ENCODE measurements at regions of chr2 and their contacts with region 1.

Region 1: DNA sequence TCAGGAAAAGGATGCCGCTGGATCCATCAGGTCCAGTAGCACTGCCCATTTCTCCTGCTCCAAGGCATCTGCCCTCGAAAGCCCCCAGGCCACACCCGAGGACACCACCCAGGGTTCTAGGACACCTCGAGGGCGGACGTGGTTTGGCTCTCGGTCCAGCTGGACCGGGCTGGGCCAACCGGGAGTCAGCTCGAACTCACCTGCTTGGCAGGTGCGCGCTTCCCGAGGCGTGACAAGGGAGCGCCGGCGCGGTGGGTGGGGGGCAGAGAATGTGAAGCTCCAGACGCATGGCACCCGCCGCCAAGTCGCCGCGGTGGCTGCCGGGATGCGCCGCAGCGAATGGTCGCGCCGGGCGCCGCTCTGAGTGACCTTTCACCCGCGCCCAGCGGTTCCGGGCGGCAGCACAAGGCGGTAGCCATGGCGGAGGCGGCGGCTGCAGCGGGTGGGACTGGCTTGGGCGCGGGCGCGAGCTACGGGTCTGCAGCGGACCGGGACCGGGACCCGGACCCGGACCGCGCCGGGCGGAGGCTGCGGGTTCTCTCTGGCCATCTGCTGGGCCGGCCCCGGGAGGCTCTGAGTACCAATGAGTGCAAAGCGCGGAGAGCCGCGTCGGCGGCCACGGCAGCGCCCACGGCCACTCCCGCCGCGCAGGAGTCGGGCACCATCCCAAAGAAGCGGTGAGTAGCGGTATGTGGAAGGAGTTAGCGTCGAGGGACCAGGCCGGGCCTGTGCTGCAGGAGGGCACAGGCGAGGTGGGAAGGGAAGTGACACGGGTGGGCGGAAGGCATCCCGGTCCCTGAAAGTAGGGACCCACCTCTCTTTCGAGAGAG is at the start of gene AGPS:
- DNase-seq: peak; percentile 77

Region 2: DNA sequence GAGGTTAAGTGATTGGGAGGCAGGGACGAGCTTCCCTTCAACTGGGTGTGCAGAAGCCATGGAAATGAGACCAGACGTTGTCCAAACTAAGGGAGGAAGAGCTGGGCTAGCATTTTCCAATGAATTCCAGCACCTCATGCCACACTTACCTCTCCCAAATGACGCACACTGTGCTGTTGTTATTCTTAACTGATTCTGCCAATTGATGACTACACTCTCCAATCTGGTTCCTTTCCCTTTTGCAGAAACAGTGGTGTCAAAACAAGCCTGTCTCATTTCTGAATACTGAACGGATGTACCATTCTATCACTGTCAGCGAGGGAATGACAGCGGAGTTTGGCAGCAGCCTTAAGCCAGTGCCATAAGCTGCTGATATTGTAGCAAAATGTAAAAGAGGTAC is 560.5 kb before region 1 on chr2:
- CTCF ChIA-PET with region 1: no interaction called
- POLR2A ChIA-PET with region 1: no interaction called
- DNase-seq: no peak

Region 3: DNA sequence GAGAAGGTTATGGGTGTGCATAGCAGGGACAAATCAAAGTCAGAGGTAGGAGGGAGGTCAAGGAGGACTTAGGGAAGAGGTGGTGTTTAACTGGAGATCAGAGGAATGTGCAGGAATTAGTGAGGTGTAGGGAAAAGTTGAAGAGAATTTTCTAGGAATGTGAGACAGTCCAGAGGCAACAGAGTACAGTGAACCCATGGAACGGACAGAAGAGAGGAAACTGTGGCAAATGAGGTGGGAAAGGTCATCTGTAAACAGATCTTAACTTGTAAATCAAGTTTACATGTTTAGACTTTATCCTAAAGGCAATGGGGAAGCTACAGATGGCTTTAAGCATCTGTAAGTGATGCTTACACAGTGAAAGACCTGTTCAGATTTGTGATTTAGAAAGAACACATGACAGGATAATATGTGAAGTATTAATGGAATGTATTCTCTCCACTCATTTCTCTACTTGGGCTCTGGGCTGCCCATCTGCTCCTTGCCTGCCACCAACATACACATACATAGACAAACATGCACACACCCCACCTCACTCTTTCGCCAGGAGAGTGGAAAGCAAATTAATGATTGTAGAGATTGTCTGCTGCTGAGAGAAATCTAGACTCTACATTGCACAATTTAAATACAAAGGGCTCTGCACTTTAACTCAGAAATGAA is 67.2 kb before region 1 on chr2:
- CTCF ChIA-PET with region 1: no interaction called
- POLR2A ChIA-PET with region 1: no interaction called
- DNase-seq: no peak

Region 4: DNA sequence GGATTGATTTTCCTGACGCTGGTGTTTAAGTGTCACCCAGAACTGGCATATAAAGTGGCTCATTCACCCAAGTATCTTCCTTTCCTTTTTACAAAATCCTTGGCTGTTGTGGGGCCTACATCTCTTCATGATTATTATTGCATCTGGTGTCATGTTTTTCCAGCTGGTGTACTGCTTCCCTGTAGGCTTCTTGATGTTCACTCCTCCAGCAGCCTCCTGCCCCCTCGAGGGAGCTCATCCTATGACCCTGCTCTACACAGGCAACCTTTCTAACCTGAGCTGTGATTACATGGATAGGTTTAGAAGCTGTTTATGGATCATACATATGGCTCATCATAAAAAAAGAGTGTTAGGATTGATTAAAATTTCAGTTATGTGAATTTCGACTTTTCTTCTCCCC is 12.4 kb before region 1 on chr2:
- CTCF ChIA-PET with region 1: no interaction called
- POLR2A ChIA-PET with region 1: interaction called, 13 read pairs
- DNase-seq: no peak

Region 5: GRCh38 chr2:177413703-177414102 is 21.1 kb after region 1 on chr2:
- CTCF ChIA-PET with region 1: no interaction called
- POLR2A ChIA-PET with region 1: no interaction called
- DNase-seq: no peak

Measured in HEK293T (cell line).